Heart left ventricle (tissue), 16 donors: ENCODE measurements at regions of chr5 and their contacts with region 1.

Region 1: DNA sequence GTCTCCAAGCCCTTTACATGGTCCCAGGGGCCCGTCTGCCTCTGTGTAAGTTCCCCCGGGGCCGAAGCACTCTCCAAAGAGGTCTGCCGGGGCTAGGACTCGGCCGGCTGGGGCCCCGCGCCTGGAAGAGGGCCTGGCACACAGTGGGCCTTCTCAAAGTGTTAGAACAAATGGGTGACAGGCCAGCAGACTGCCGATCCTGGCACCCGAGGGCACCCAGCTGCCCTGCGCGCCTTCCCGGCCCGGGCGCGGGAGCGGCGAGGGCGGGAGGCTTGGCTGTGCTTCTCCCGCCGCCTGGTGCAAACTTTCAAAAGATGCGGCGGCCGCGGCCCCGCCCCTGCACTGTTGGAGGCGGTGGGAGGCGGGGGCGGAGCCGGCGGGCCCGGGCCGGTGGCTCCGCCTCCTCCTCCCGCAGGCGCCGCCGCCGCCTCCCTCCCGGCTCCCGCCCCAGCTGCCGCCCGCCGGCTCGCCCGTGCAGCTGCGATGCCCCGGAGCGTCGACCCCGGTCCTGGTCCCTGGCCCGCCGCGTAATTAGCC is at the start of gene NEURL1B:
- DNase-seq: peak; percentile 81 to 91 (median 89)
- ATAC-seq: peak; percentile 68 to 88 (median 82)
- H3K4me3 ChIP-seq: peak within 1 kb of the TSS; percentile 73 to 98 (median 88)
- H3K27ac ChIP-seq: peak within 1 kb of the TSS; percentile 93 to 99 (median 98)
- H3K4me1 ChIP-seq: peaks cover 0 to 50% (median 26%) of the 10 kb centered on the region in 12 donors
- H3K27me3 ChIP-seq: peaks cover 0 to 11% (median 0%) of the 10 kb centered on the region in 9 donors
- CTCF ChIP-seq: peak in 7 of 12 donors; percentile 5 to 53 (median 29)
- POLR2A ChIP-seq: peak in 1 of 2 donors; percentile 59
- total RNA-seq, gene NEURL1B: 16.1 to 47.1 (median 25.8) TPM

Region 2: GRCh38 chr5:172502969-172503368 is 137.9 kb before region 1 on chr5:
- intact Hi-C with region 1: loop called in 1 of 10 experiments (anchors 5 kb)
- DNase-seq: peak in 2 of 5 donors; percentile 7 to 12
- ATAC-seq: no peak
- H3K4me3 ChIP-seq: no peak overlapping the region
- H3K27ac ChIP-seq: peak overlapping the region; percentile 35 to 97 (median 85)
- H3K4me1 ChIP-seq: peaks cover 0 to 30% (median 16%) of the 10 kb centered on the region in 12 donors
- H3K27me3 ChIP-seq: no peaks in the 10 kb centered on the region
- CTCF ChIP-seq: no peak
- POLR2A ChIP-seq: no peak

Region 3: GRCh38 chr5:172583931-172584511 is 56.9 kb before region 1 on chr5:
- intact Hi-C with region 1: loop called in 6 of 10 experiments (anchors 1 to 10 kb)
- DNase-seq: peak; percentile 73 to 80 (median 79)
- ATAC-seq: peak; percentile 81 to 89 (median 86)
- H3K4me3 ChIP-seq: no peak overlapping the region
- H3K27ac ChIP-seq: peak overlapping the region; percentile 73 to 97 (median 87)
- H3K4me1 ChIP-seq: peaks cover 0 to 79% (median 49%) of the 10 kb centered on the region in 12 donors
- H3K27me3 ChIP-seq: no peaks in the 10 kb centered on the region
- CTCF ChIP-seq: no peak
- POLR2A ChIP-seq: no peak

Region 4: GRCh38 chr5:172659909-172660628 is 19.2 kb after region 1 on chr5:
- intact Hi-C with region 1: loop called in 1 of 10 experiments (anchors 2 kb)
- DNase-seq: peak; percentile 90 to 98 (median 94)
- ATAC-seq: peak; percentile 91 to 93 (median 92)
- H3K4me3 ChIP-seq: peak overlapping the region in 4 of 12 donors; percentile 0 to 27 (median 12)
- H3K27ac ChIP-seq: peak overlapping the region; percentile 75 to 98 (median 89)
- H3K4me1 ChIP-seq: peaks cover 19 to 93% (median 76%) of the 10 kb centered on the region in 12 donors
- H3K27me3 ChIP-seq: no peaks in the 10 kb centered on the region
- CTCF ChIP-seq: peak in 2 of 12 donors; percentile 22 to 33
- POLR2A ChIP-seq: no peak

Region 5: GRCh38 chr5:172860520-172861443 is 219.9 kb after region 1 on chr5:
- intact Hi-C with region 1: no loop called
- DNase-seq: peak; percentile 88 to 95 (median 90)
- ATAC-seq: peak; percentile 87 to 93 (median 90)
- H3K4me3 ChIP-seq: peak overlapping the region in 9 of 12 donors; percentile 7 to 26 (median 21)
- H3K27ac ChIP-seq: peak overlapping the region; percentile 87 to 97 (median 94)
- H3K4me1 ChIP-seq: peaks cover 24 to 76% (median 59%) of the 10 kb centered on the region in 12 donors
- H3K27me3 ChIP-seq: no peaks in the 10 kb centered on the region
- CTCF ChIP-seq: no peak
- POLR2A ChIP-seq: peak in 1 of 2 donors; percentile 53